ENCODE measurements at regions of chr10 and their contacts with region 1.

Region 1: DNA sequence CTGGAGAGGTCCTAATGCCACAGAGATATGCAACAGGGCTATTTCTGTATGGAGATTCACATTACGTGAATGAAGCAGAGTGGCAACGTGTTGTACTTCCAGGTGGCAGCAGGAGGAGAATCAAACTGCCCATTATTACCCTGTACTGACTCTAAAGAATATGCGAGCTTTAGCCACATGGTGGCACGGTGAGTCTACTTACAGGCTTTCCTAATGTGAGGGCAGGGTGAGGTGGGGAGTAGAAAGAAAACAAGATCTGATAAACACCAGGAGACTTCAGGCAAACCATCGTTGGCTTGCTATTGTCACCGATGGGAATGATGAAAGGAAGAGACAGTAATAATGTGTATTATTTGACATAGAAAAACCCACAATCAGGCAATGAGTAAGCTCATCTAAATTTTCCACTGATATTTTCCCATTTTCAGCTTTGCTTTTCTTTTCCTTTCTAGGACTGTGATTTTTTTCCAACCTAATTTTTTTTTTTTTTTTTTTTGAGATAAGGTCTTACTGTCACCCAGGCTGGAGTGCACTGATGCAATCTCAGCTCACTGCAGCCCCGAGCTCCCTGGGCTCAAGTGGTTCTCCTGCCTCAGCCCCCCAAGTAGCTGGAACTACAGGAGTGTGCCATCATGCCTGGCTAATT is 164.3 kb downstream of the BTAF1 start:
- DNase-seq: peak; percentile 71
- CTCF ChIP-seq: peak; percentile 86

Region 2: GRCh38 chr10:92303096-92303495 is 215.2 kb after region 1 on chr10:
- in situ Hi-C with region 1: loop called (anchors 10 kb)
- DNase-seq: no peak
- CTCF ChIP-seq: no peak

Region 3: GRCh38 chr10:92432596-92432995 is 344.7 kb after region 1 on chr10:
- in situ Hi-C with region 1: loop called (anchors 10 kb)
- DNase-seq: no peak
- CTCF ChIP-seq: no peak